ENCODE measurements at regions of chr13 and their contacts with region 1.

Region 1: GRCh38 chr13:85347251-85347650 is 452.0 kb downstream of the SLITRK6 start:
- DNase-seq: peak; percentile 23
- ATAC-seq: peak; percentile 42; the same call in 1 of the 2 replicates
- H3K4me3 ChIP-seq: no peak overlapping the region
- H3K27ac ChIP-seq: no peak overlapping the region
- H3K4me1 ChIP-seq: no peaks in the 10 kb centered on the region
- H3K27me3 ChIP-seq: no peaks in the 10 kb centered on the region
- CTCF ChIP-seq: no peak

Region 2: DNA sequence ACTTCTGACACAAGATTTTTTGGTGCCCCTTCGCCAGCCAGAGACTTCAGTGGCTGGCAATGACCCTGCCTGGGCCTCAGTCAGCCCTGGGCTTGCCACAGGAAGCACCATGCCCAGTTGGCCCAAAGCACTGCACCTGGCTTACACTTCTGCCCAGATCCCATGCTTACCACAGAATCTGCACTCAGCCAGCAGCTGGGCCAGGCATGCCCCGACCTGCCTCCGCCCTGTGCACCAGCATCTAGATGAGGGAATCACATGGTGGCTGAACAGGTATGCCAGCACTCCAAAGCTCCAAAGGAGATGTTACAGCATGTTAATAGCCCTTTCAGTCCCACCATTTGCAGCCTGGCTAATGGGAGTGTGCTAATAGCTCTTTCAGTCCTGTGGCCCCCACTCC is 238.9 kb before region 1 on chr13:
- CTCF ChIA-PET with region 1: no interaction called
- POLR2A ChIA-PET with region 1: no interaction called
- intact Hi-C with region 1: no loop called
- DNase-seq: no peak
- ATAC-seq: no peak
- H3K4me3 ChIP-seq: no peak overlapping the region
- H3K27ac ChIP-seq: no peak overlapping the region
- H3K4me1 ChIP-seq: no peaks in the 10 kb centered on the region
- H3K27me3 ChIP-seq: no peaks in the 10 kb centered on the region
- CTCF ChIP-seq: no peak

Region 3: GRCh38 chr13:85367887-85368286 is 20.6 kb after region 1 on chr13:
- CTCF ChIA-PET with region 1: no interaction called
- POLR2A ChIA-PET with region 1: interaction called, 16 read pairs
- intact Hi-C with region 1: no loop called
- DNase-seq: no peak
- ATAC-seq: no peak
- H3K4me3 ChIP-seq: no peak overlapping the region
- H3K27ac ChIP-seq: peak overlapping the region; percentile 65; the same call in 1 of the 2 replicates
- H3K4me1 ChIP-seq: peaks cover 21% of the 10 kb centered on the region
- H3K27me3 ChIP-seq: no peaks in the 10 kb centered on the region
- CTCF ChIP-seq: no peak